Prostate gland (tissue), 2 donors: ENCODE measurements at regions of chr9 and their contacts with region 1.

Region 1: DNA sequence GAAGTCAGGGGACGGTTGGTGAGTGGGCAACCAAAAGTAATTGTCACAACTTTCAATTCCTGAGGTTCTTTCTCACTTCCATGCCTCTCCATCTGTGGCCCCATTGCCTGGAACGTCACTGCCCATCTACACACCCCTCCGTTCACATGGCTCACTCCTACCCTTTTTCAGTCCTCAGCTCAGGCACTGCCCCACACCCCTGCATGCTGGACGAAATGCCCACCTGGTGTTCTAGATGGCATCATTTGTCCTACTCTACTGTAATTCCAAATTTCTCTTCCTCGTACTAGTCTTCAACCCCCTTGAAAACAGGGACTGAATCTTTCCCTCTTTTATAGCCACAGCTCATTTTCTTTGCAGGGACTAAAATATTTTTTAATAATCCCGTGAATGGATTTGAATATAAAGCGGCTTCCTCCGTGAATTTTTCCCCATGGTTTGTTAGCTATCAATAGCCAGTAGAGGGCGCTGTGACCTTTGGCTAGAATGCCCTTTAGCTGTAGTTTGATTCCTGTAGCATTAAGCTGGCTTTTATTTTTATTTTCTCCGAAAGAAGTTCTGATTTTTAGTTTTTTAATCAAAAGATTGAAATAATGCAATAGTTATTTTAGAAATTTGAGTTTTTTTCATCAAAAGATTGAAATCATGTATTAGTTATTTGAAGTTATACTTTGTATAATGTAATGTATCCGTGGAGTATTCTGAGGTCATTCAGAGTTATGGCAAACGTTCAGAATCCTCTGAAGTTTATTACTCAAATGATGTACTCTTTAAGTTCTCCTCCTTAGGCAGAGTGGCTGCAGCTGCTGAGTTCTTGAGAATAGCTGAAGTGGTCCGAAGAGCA is 232.1 kb downstream of the SH3GL2 start:
- DNase-seq: peak; percentile 58
- H3K4me3 ChIP-seq: no peak overlapping the region
- H3K27ac ChIP-seq: no peak overlapping the region
- H3K4me1 ChIP-seq: no peaks in the 10 kb centered on the region
- H3K27me3 ChIP-seq: no peaks in the 10 kb centered on the region
- CTCF ChIP-seq: peak; percentile 84 to 95 (median 86)
- POLR2A ChIP-seq: no peak

Region 2: DNA sequence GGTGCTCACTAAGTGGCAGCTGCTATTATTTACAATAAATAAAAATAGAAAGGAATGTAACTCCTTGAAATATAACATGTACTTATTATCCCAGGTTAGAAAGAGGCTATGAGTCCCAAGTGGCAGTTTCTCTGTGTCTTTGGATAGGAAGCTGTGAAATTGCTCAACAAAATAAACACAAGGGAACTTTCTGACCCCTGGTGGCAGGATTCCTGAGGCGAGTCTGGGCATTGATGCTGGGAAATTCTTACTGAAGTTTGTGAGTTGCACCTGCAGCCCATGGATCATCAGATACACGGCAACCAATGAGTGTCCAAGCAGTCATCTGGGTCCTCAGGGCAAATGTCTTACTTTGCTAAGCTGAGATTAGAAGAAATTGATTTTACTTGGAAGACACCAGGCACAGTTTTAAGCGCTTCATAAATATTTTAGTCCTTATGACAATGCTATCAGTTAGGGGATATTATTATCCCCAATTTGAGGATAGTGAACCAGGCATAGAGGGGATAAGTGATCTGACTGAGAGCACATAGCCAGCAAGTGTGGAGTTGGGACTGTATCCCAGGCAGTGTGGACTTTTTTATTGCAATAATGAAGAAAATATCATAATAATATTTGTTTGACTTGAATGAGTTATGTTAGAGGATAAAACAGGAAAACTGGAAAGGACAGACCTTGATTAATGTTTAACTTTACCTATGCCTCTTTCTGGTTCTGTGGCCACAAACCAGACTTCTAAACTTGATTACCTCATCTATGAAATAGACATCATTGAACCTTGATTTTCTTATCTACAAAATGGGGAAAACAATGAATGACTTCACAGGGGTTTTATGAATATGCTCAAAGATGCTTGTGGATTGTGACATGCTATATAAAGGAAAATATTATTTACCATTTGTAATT is 397.5 kb after region 1 on chr9:
- intact Hi-C with region 1: loop called (anchors 2 kb)
- DNase-seq: peak; percentile 69
- H3K4me3 ChIP-seq: no peak overlapping the region
- H3K27ac ChIP-seq: no peak overlapping the region
- H3K4me1 ChIP-seq: no peaks in the 10 kb centered on the region
- H3K27me3 ChIP-seq: no peaks in the 10 kb centered on the region
- CTCF ChIP-seq: peak in 3 of 4 experiments; percentile 57 to 69 (median 59)
- POLR2A ChIP-seq: no peak